Activated B cell treated with CpG ODN at 0.5 μM for 24 hours (primary cell): ENCODE measurements at regions of chr9 and their contacts with region 1.

Region 1: GRCh38 chr9:124940693-124941453 is at the start of gene GOLGA1:
- DNase-seq: peak; percentile 92
- ATAC-seq: peak; percentile 87
- H3K4me3 Mint-ChIP-seq: peak within 1 kb of the TSS; percentile 96
- H3K27ac Mint-ChIP-seq: peak within 1 kb of the TSS; percentile 98
- H3K4me1 Mint-ChIP-seq: peaks cover 23% of the 10 kb centered on the region
- H3K27me3 Mint-ChIP-seq: no peaks in the 10 kb centered on the region
- CTCF ChIP-seq: no peak
- total RNA-seq, gene GOLGA1: 11.8 and 14.0 TPM in 2 replicates

Region 2: GRCh38 chr9:124868511-124869465 is 72.1 kb before region 1 on chr9:
- CTCF ChIA-PET with region 1: no interaction called
- POLR2A ChIA-PET with region 1: interaction called, 4 read pairs
- intact Hi-C with region 1: loop called (anchors 1 kb)
- DNase-seq: peak; percentile 97
- ATAC-seq: peak; percentile 69
- H3K4me3 Mint-ChIP-seq: peak overlapping the region; percentile 91
- H3K27ac Mint-ChIP-seq: peak overlapping the region; percentile 97
- H3K4me1 Mint-ChIP-seq: peaks cover 54% of the 10 kb centered on the region
- H3K27me3 Mint-ChIP-seq: no peaks in the 10 kb centered on the region
- CTCF ChIP-seq: no peak

Region 3: DNA sequence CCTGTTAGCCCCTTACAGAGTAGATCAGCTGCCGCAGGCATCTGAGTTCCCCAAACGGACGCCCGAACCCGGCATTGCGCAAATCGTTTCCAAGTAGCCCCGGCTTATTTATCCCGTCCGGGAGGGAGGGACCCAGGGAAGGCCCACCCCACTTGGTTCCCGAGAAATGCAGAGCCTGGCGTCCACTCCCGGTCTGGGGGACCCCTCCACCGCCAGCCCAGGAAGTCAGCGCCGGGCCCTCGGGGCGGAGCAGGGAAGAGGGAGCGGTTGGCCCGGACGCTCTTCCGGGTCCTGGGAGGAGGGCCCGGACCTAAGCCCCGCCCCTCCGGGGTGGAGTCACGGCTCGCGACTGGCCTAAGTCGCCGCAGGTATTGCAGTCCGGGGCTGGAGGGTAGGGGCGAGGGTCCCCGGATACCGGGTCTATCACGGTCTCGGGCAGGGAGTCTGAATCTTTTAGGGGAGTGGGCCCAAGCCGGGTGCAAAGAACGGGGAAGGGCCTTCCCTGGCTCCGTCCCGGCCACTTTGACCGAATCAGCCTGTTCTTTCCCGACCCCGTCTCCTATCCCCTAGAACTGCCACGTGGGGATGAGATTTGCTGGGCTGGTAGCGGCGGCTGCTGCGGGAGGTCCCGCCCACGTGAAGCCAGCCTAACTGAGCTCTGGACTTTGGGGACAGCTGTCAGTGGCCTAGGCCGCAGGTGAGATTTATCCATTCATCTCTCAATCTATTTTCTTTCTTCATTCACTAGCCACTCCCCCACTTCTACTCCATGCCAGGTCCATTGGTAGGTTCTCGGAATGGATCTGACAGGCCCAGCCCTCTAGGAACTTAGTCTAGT is 259.6 kb after region 1 on chr9 and contains the start of gene RABEPK:
- CTCF ChIA-PET with region 1: no interaction called
- POLR2A ChIA-PET with region 1: interaction called, 12 read pairs
- intact Hi-C with region 1: no loop called
- DNase-seq: peak; percentile 95
- ATAC-seq: peak; percentile 98
- H3K4me3 Mint-ChIP-seq: peak within 1 kb of the TSS; percentile 94
- H3K27ac Mint-ChIP-seq: peak within 1 kb of the TSS; percentile 92
- H3K4me1 Mint-ChIP-seq: peaks cover 13% of the 10 kb centered on the region
- H3K27me3 Mint-ChIP-seq: no peaks in the 10 kb centered on the region
- CTCF ChIP-seq: no peak
- total RNA-seq, gene RABEPK: 19.1 and 19.4 TPM in 2 replicates

Region 4: GRCh38 chr9:125261501-125262293 is 320.8 kb after region 1 on chr9 and contains the start of gene GAPVD1:
- CTCF ChIA-PET with region 1: no interaction called
- POLR2A ChIA-PET with region 1: no interaction called
- intact Hi-C with region 1: loop called (anchors 2 kb)
- DNase-seq: peak; percentile 97
- ATAC-seq: peak; percentile 93
- H3K4me3 Mint-ChIP-seq: peak within 1 kb of the TSS; percentile 96
- H3K27ac Mint-ChIP-seq: peak within 1 kb of the TSS; percentile 99
- H3K4me1 Mint-ChIP-seq: peaks cover 48% of the 10 kb centered on the region
- H3K27me3 Mint-ChIP-seq: peaks cover 2% of the 10 kb centered on the region
- CTCF ChIP-seq: no peak
- total RNA-seq, gene GAPVD1: 46.6 and 53.9 TPM in 2 replicates